ENCODE measurements at regions of chr19 and their contacts with region 1.

Region 1: DNA sequence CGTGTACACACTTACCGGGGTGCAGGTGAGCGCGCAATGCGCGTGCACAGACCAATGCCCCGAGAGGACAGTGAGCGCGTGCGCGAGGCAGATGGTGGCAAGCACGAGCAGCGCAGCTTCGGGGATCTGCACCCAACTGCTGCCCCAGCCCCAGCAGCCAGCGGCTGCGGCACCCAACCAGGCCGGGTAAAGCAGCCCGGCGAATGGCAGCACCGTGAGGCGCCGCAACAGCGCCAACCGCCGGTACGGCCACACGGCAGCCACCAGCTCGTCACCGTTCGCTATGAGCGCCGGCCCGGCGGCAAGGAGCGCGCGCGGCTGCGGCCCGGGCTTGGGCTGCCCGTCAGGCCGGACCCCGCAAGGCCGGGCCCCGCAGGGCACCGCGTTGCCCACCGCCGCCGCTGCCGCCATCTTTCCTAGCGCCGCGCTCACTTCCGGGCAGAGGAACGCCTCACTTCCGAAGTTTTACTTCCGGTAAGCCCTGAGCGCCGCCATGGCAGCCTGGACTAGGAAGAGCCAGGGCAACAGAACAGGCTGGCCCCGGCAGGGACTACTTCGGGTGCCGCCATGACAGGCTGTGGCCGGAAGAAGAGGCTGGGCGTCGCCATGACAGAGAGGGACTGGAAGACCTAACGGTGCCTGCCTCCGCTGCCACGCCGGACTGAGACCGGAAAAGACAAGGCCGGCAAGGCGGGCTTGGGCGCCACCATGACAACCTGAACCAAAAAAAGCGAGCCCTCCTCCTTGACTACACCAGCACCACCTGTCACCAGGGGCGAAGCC is at the start of gene ATP13A1:
- DNase-seq: peak; percentile 98
- total RNA-seq, gene ATP13A1: 24.3 and 71.6 TPM in 2 replicates

Region 2: GRCh38 chr19:19531951-19532805 is 131.3 kb before region 1 on chr19:
- in situ Hi-C with region 1: loop called (anchors 10 kb)
- DNase-seq: peak; percentile 35

Region 3: GRCh38 chr19:19711934-19712828 is 48.7 kb after region 1 on chr19:
- in situ Hi-C with region 1: no loop called
- DNase-seq: peak; percentile 25

Measured in Caki2 (cell line).